ENCODE measurements at regions of chr2 and their contacts with region 1.

Region 1: DNA sequence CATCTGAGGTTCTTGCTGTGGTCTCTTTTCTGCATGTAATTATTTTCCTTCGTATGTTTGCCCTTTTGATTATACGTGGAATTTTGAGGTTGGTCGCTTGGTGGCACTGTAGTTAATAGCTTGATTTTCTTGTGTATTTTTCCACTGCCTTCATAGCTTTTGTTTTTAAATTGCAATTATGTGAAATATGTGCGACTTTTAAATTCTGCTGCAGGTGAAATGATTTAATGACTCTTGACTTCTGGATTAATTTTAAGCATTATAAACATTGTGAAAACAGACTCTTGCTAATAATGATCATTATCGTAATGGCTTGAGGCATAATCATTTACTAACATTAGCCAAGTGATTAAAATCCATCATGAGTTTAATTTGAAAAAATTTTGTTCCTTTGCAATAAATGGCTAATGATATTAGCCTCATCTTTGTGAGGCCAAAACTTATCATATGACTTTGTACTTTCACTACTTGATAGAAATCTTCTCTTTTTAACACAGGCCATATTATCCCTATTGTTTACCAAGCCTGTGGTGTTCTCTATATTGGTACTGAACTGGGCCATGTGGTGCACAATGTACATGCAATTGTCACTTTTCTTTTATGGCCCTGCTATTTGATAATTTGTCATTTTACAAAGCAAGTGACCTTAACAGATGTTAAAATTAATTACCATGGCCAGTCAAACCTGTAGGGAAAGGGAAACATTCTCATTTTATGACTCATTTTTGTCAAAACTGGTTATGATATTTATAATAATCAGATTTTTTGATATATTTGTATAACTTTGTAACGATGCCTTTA is 62.8 kb upstream of the NEUROD1 start:
- DNase-seq: peak in 4 of 5 donors; percentile 27 to 39 (median 34)
- H3K4me3 ChIP-seq: no peak overlapping the region
- H3K4me3 Mint-ChIP-seq: no peak overlapping the region
- H3K27ac ChIP-seq: no peak overlapping the region
- H3K27ac Mint-ChIP-seq: no peak overlapping the region
- H3K4me1 ChIP-seq: no peaks in the 10 kb centered on the region
- H3K4me1 Mint-ChIP-seq: no peaks in the 10 kb centered on the region
- H3K27me3 ChIP-seq: no peaks in the 10 kb centered on the region
- H3K27me3 Mint-ChIP-seq: peaks cover 4 to 6% of the 10 kb centered on the region in 2 donors

Region 2: DNA sequence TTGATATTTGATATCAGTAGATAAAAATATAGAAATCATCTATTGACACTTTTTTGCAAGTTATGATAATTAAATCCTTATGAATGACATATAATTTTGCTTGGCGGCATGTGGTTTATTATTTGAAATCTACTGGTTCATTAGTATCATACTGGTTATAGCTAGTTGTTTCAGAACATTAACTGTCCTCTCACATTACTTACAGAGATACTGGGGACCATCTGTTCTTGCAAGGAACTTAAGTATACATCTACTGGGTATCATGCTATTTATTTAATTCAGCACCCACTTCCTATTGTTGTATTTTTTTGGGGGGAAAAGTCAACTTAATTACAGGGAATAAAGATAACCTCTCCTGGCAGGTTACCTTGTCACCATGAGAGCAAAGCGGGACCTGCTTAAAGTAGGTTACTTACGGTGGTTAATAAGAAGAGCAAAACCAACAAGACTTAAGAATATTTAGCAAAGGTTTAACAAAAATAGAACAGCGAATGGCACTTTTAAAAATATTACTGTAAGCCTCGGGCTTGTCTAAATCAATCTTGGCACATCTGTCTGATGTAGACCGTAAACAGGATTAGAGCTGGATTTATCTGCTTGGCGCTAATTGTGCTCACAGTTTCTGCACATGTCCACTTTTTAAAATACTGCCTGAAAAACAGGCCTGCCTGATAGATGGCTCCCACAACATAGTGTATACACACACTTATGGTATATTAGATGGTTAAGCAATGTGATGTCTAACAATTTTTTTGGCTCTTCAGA is 128.1 kb before region 1 on chr2:
- CTCF ChIA-PET with region 1: no interaction called
- POLR2A ChIA-PET with region 1: no interaction called
- intact Hi-C with region 1: no loop called
- DNase-seq: no peak
- H3K4me3 ChIP-seq: no peak overlapping the region
- H3K4me3 Mint-ChIP-seq: no peak overlapping the region
- H3K27ac ChIP-seq: no peak overlapping the region
- H3K27ac Mint-ChIP-seq: no peak overlapping the region
- H3K4me1 ChIP-seq: no peaks in the 10 kb centered on the region
- H3K4me1 Mint-ChIP-seq: no peaks in the 10 kb centered on the region
- H3K27me3 ChIP-seq: no peaks in the 10 kb centered on the region
- H3K27me3 Mint-ChIP-seq: peaks cover 4 to 7% of the 10 kb centered on the region in 2 donors

Region 3: DNA sequence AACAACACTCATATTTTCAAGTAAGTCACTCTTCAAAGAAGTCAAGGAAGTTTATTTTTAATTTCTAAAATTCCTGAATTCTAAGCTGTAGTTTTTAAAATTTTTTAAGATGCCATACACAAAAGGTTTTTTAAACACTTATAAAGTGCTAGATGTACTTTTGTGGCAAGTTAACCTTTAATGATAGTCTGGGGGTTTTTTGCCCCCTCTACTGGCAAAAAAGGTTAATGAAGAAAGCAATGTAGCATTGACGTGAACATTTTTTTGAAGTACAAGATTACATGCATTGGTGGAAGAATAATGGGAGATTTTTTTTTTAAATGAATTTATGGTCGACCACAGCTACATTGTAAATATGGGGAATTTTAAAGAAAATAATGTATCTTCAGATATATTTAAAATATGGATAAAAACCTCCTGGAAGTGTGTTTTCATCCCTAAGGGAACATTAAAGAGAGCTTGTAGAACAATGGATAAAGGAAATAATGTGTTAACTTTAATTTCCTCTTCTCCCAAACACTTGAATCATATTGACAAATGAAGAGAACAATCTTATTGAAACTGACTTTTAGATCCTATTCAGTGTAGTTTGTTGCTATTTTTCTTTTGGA is 161.0 kb after region 1 on chr2:
- CTCF ChIA-PET with region 1: interaction called, 31 read pairs
- POLR2A ChIA-PET with region 1: no interaction called
- intact Hi-C with region 1: loop called (anchors 1 kb)
- DNase-seq: peak in 4 of 5 donors; percentile 21 to 37 (median 29)
- H3K4me3 ChIP-seq: no peak overlapping the region
- H3K4me3 Mint-ChIP-seq: no peak overlapping the region
- H3K27ac ChIP-seq: no peak overlapping the region
- H3K27ac Mint-ChIP-seq: peak overlapping the region in 1 of 7 donors; percentile 13
- H3K4me1 ChIP-seq: peaks cover 14% of the 10 kb centered on the region
- H3K4me1 Mint-ChIP-seq: peaks cover 13 to 20% (median 16%) of the 10 kb centered on the region in 4 donors
- H3K27me3 ChIP-seq: no peaks in the 10 kb centered on the region
- H3K27me3 Mint-ChIP-seq: no peaks in the 10 kb centered on the region

Region 4: DNA sequence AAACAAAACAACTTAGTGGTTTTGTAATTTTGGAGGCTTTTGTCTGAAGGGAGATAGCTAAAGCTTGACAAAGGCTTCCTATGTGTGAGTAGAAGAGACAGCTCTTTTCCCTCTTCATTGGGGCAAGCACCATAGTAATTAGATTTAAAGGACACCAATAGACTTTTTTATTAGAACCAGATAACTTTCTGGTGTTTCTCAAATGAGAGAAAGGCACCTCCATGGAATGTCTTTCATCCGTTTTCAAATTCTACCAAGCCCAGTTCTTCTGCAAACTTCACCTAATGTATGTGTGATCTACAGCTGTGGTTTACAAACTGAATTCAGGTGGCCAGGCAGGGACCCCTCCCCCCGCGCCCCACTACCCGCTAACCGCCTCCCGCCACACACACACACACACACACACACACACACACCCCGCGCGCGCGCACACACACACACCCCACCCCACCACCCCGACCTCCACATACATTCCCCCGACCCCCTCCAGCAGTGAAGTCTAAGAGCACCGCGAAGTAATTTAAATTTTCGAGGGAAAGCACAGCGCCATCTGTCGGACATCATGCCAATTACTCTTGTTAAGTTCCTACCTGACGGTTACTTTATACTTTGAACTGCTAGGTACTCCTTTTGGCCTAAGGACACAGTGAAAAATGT is 210.9 kb after region 1 on chr2:
- CTCF ChIA-PET with region 1: interaction called, 30 read pairs
- POLR2A ChIA-PET with region 1: no interaction called
- intact Hi-C with region 1: loop called (anchors 1 kb)
- DNase-seq: peak; percentile 42 to 49 (median 45)
- H3K4me3 ChIP-seq: no peak overlapping the region
- H3K4me3 Mint-ChIP-seq: peak overlapping the region in 7 of 8 donors; percentile 65 to 82 (median 70)
- H3K27ac ChIP-seq: no peak overlapping the region
- H3K27ac Mint-ChIP-seq: no peak overlapping the region
- H3K4me1 ChIP-seq: peaks cover 10% of the 10 kb centered on the region
- H3K4me1 Mint-ChIP-seq: peaks cover 8 to 13% (median 11%) of the 10 kb centered on the region in 4 donors
- H3K27me3 ChIP-seq: no peaks in the 10 kb centered on the region
- H3K27me3 Mint-ChIP-seq: peaks cover 18 to 25% of the 10 kb centered on the region in 2 donors

Region 5: DNA sequence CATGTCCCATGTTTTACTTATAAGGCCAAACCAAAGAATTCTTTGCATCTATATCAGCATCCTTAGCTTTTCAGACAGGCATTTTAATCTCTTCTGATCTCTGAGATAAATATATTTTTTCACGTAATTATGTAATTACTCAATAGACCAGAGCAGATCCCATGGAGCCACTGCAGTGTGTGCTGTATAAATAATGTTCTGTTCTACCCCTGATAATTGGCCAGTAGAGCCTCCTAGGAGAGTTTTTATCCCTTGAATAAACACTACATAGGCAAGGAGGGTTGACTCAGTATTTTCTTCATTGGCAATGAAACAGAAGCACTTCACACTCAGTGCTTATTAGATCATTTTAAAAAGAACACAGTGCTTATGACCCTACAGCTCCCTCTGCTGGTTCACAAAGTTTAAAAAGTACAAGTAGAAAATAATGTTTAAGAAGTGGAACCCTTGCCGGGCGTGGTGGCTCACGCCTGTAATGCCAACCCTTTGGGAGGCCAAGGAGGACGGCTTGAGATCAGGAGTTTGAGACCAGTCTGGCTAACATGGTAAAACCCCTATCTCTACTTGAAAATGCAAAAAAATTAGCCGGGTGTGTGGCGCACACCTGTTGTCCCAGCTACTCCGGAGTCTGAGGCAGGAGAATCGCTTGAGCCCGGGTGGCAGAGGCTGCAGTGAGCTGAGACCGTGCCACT is 334.5 kb after region 1 on chr2:
- CTCF ChIA-PET with region 1: interaction called, 14 read pairs
- POLR2A ChIA-PET with region 1: no interaction called
- intact Hi-C with region 1: no loop called
- DNase-seq: peak in 4 of 5 donors; percentile 2 to 6 (median 4)
- H3K4me3 ChIP-seq: no peak overlapping the region
- H3K4me3 Mint-ChIP-seq: no peak overlapping the region
- H3K27ac ChIP-seq: no peak overlapping the region
- H3K27ac Mint-ChIP-seq: no peak overlapping the region
- H3K4me1 ChIP-seq: no peaks in the 10 kb centered on the region
- H3K4me1 Mint-ChIP-seq: no peaks in the 10 kb centered on the region
- H3K27me3 ChIP-seq: no peaks in the 10 kb centered on the region
- H3K27me3 Mint-ChIP-seq: peaks cover 1 to 5% of the 10 kb centered on the region in 2 donors

Region 6: GRCh38 chr2:182650704-182651103 is 907.6 kb after region 1 on chr2:
- CTCF ChIA-PET with region 1: no interaction called
- POLR2A ChIA-PET with region 1: no interaction called
- intact Hi-C with region 1: no loop called
- DNase-seq: peak in 2 of 5 donors; percentile 12 to 27
- H3K4me3 ChIP-seq: no peak overlapping the region
- H3K4me3 Mint-ChIP-seq: no peak overlapping the region
- H3K27ac ChIP-seq: no peak overlapping the region
- H3K27ac Mint-ChIP-seq: peak overlapping the region in 3 of 7 donors; percentile 36 to 44 (median 39)
- H3K4me1 ChIP-seq: no peaks in the 10 kb centered on the region
- H3K4me1 Mint-ChIP-seq: peaks cover 10 to 21% (median 14%) of the 10 kb centered on the region in 4 donors
- H3K27me3 ChIP-seq: no peaks in the 10 kb centered on the region
- H3K27me3 Mint-ChIP-seq: peaks cover 0 to 4% of the 10 kb centered on the region in 2 donors